Activated B cell treated with CpG ODN at 0.5 μM for 24 hours (primary cell): ENCODE measurements at regions of chr20 and their contacts with region 1.

Region 1: DNA sequence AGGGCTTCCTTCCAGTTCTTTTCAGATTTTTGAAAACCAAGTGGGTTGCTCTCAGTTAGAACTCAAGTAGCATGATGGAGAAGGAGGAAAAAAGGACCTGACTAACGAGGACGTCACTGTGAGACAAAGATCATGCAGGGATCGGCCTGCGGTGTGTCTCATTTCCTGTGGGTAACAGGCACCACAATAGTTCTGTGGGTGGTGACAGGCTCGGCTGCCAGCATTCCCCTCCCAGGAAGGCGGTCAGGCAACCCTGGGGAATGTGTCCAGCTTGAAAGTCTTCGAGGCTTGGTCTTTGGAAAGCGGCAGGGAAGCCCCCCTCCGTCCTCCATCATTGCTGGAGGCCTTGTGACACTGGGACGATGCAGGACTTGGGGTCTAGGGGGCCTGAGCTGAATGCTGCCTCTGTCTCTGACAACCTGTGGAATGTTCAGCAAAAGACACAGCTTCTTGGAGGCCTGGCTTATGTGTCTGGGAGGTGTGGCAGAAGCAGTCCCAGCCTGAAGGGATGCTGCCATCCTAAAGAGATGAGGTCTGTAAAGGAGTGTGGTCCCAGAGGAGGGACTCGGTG is 121.0 kb downstream of the BCAS1 start:
- DNase-seq: peak; percentile 47
- ATAC-seq: peak; percentile 90
- H3K4me3 Mint-ChIP-seq: peak overlapping the region; percentile 71
- H3K27ac Mint-ChIP-seq: peak overlapping the region; percentile 87
- H3K4me1 Mint-ChIP-seq: peaks cover 25% of the 10 kb centered on the region
- H3K27me3 Mint-ChIP-seq: no peaks in the 10 kb centered on the region
- CTCF ChIP-seq: no peak

Region 2: DNA sequence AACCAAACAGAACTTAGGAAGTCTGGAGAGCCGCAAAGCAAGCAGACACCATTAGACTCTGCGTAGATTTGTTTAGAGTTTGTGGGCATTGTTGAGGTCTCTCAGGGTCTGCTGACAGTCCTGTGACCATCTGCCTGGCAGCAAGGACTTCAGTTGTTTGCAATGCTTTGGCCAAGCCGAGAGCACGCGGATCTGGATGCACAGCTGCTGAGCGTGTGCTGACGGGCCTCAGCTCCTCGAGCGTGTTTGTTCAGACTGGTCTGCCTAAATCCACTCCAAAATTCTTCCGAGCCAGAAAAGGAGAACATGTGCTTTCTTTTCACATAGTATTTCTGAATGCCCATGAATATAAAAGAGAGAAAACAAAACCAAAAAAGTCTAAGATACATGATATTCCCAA is 514.7 kb before region 1 on chr20:
- CTCF ChIA-PET with region 1: no interaction called
- POLR2A ChIA-PET with region 1: interaction called, 11 read pairs
- intact Hi-C with region 1: no loop called
- DNase-seq: no peak
- ATAC-seq: no peak
- H3K4me3 Mint-ChIP-seq: no peak overlapping the region
- H3K27ac Mint-ChIP-seq: no peak overlapping the region
- H3K4me1 Mint-ChIP-seq: no peaks in the 10 kb centered on the region
- H3K27me3 Mint-ChIP-seq: peaks cover 12% of the 10 kb centered on the region
- CTCF ChIP-seq: no peak

Region 3: DNA sequence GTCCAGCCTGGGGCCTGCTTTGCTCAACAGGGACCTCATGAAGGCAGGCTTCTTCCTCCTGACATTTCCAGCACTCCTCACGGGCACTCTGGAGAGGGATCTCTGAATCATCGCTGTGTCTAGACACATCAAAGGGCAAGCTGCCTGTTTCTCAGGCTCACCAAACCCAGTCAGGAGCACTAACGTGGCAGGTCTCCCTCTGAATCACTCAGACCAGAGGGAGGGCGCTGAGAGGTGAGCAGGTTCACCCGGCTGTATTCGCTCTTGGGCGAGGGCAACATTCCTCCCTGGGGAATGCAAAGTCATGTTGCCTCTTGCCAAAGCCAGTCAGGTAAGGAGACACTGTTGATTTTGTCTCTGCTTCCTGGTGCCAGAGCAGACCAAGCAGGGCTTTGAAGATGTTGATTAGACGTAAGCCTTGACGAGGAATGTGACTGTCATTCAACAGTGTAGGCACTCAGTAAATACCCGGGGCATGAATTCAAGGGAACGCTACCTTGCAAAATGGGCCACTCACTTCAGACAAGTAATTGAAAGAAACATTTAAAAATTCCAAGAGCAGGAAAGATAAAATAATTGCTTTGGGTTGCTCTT is 174.3 kb after region 1 on chr20:
- CTCF ChIA-PET with region 1: no interaction called
- POLR2A ChIA-PET with region 1: no interaction called
- intact Hi-C with region 1: no loop called
- DNase-seq: no peak
- ATAC-seq: no peak
- H3K4me3 Mint-ChIP-seq: no peak overlapping the region
- H3K27ac Mint-ChIP-seq: no peak overlapping the region
- H3K4me1 Mint-ChIP-seq: peaks cover 2% of the 10 kb centered on the region
- H3K27me3 Mint-ChIP-seq: no peaks in the 10 kb centered on the region
- CTCF ChIP-seq: no peak